ENCODE measurements at regions of chr7 and their contacts with region 1.

Region 1: DNA sequence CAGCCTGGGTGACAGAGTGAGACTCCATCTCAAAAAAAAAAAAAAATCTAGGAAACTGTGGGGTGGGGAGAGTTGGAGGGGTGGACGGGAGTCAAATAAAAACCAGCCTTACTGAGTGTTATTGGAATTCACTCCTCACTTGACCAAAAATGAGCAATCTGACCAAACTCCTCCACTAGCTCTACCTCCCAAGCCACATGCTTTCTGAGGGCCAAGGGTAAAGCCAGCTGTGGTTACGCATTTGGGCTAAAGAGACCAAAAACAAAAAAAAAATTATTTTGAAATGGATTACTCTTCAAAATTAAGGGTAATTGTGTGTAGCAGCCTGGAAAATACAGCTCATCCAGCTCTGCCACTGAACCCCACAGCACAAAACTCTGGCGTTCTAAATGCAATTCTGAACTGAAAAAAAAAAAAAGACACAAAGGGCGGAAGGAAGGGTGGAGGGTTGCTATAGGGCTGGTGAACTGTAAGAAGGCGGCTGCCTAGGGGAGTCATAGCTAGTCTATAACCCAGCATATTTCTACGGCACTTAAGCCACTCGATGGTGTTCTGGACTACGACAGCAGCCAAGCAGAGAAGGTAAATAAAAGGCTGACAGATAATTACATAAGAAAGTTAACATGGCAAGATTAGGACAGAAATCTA is 7.8 kb downstream of the ELMO1 start:
- DNase-seq: peak in 8 of 9 donors; percentile 33 to 60 (median 44)
- ATAC-seq: peak; percentile 88
- H3K4me3 ChIP-seq: peak overlapping the region; percentile 31
- H3K4me3 Mint-ChIP-seq: peak overlapping the region; percentile 25 to 89 (median 78)
- H3K27ac ChIP-seq: peak overlapping the region; percentile 74
- H3K27ac Mint-ChIP-seq: peak overlapping the region; percentile 86 to 98 (median 94)
- H3K4me1 ChIP-seq: peaks cover 0 to 61% of the 10 kb centered on the region in 2 donors
- H3K4me1 Mint-ChIP-seq: peaks cover 41 to 96% (median 85%) of the 10 kb centered on the region in 7 donors
- H3K27me3 ChIP-seq: no peaks in the 10 kb centered on the region
- H3K27me3 Mint-ChIP-seq: no peaks in the 10 kb centered on the region

Region 2: DNA sequence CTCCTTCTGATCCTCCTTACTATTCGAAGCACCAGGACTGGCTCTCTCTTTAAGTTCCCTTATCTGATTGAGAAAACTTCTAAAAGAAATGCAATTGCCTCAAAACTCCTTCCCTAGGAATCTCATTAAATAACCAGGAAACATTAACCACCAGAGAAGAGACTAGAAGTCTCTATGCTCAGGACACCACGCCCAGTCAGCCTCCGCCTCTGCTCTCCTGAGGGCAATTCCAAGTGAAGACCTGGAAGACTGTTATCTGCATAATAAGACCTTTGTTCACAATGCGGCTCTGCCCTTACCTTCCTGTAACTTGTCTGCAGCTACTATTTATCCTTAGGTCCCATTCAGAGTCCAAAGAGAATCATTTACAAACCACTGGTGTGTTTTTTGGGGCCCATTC is 71.0 kb before region 1 on chr7:
- CTCF ChIA-PET with region 1: no interaction called
- POLR2A ChIA-PET with region 1: no interaction called
- intact Hi-C with region 1: loop called in 1 of 2 experiments (anchors 2 kb)
- DNase-seq: no peak
- ATAC-seq: no peak
- H3K4me3 ChIP-seq: no peak overlapping the region
- H3K4me3 Mint-ChIP-seq: no peak overlapping the region
- H3K27ac ChIP-seq: no peak overlapping the region
- H3K27ac Mint-ChIP-seq: peak overlapping the region in 2 of 9 donors; percentile 13 to 59
- H3K4me1 ChIP-seq: peaks cover 12 to 17% of the 10 kb centered on the region in 2 donors
- H3K4me1 Mint-ChIP-seq: peaks cover 27 to 70% (median 51%) of the 10 kb centered on the region in 7 donors
- H3K27me3 ChIP-seq: no peaks in the 10 kb centered on the region
- H3K27me3 Mint-ChIP-seq: no peaks in the 10 kb centered on the region

Region 3: GRCh38 chr7:37408291-37409228 is 32.3 kb before region 1 on chr7:
- CTCF ChIA-PET with region 1: interaction called, 5 read pairs
- POLR2A ChIA-PET with region 1: interaction called, 48 read pairs
- intact Hi-C with region 1: loop called in 1 of 2 experiments (anchors 1 kb)
- DNase-seq: peak in 7 of 9 donors; percentile 14 to 58 (median 32)
- ATAC-seq: peak; percentile 57
- H3K4me3 ChIP-seq: peak overlapping the region; percentile 29
- H3K4me3 Mint-ChIP-seq: peak overlapping the region; percentile 66 to 91 (median 88)
- H3K27ac ChIP-seq: peak overlapping the region; percentile 54
- H3K27ac Mint-ChIP-seq: peak overlapping the region; percentile 86 to 95 (median 90)
- H3K4me1 ChIP-seq: peaks cover 19 to 34% of the 10 kb centered on the region in 2 donors
- H3K4me1 Mint-ChIP-seq: peaks cover 53 to 93% (median 86%) of the 10 kb centered on the region in 7 donors
- H3K27me3 ChIP-seq: no peaks in the 10 kb centered on the region
- H3K27me3 Mint-ChIP-seq: no peaks in the 10 kb centered on the region

Region 4: DNA sequence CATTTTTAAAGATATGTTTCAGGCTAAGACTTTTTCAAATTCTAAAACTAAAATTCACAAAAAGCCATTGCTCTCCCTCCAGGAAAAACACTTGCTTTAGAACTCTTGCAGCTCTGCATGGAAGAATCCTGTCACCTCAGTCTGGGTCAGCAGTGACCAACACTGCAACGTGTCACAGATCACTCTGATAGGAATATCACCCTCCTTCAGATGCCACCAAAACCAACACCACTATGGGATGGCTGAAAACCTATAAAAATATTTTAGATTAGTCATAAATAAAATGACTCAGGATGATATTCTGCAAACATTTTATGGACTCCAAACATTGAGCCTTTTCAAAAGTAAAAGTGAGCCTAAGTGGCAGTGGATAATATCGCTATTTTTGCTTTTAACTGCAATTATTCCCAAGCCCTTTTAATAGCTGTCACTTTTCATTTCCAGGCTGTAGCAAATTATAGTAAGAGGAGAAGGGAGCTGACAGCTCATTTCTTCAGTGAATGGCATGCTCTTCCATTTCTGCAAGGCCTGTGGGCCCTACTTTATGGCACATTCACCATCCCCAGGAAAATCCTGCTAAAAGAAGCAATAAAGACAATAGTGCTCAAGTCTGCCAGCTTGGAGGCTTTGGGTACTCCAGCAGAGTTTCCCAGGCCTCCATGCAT is 13.5 kb before region 1 on chr7:
- CTCF ChIA-PET with region 1: interaction called, 3 read pairs
- POLR2A ChIA-PET with region 1: interaction called, 4 read pairs
- intact Hi-C with region 1: loop called in 1 of 2 experiments (anchors 1 kb)
- DNase-seq: no peak
- ATAC-seq: no peak
- H3K4me3 ChIP-seq: no peak overlapping the region
- H3K4me3 Mint-ChIP-seq: no peak overlapping the region
- H3K27ac ChIP-seq: no peak overlapping the region
- H3K27ac Mint-ChIP-seq: no peak overlapping the region
- H3K4me1 ChIP-seq: peaks cover under 1 to 5% of the 10 kb centered on the region in 2 donors
- H3K4me1 Mint-ChIP-seq: peaks cover 22 to 54% (median 38%) of the 10 kb centered on the region in 7 donors
- H3K27me3 ChIP-seq: no peaks in the 10 kb centered on the region
- H3K27me3 Mint-ChIP-seq: no peaks in the 10 kb centered on the region